Naive thymus-derived CD4-positive, alpha-beta T cell (primary cell): ENCODE measurements at regions of chr1 and their contacts with region 1.

Region 1: GRCh38 chr1:228212966-228213844 is 5.4 kb downstream of the OBSCN start:
- DNase-seq: peak; percentile 71 to 88 (median 82)
- ATAC-seq: peak; percentile 95
- H3K4me3 ChIP-seq: peak overlapping the region; percentile 68
- H3K4me3 Mint-ChIP-seq: peak overlapping the region; percentile 77 to 95 (median 91)
- H3K27ac ChIP-seq: peak overlapping the region; percentile 73
- H3K27ac Mint-ChIP-seq: peak overlapping the region; percentile 28 to 96 (median 88)
- H3K4me1 ChIP-seq: no peaks in the 10 kb centered on the region
- H3K4me1 Mint-ChIP-seq: peaks cover 3 to 13% (median 5%) of the 10 kb centered on the region in 7 donors
- H3K27me3 ChIP-seq: no peaks in the 10 kb centered on the region
- H3K27me3 Mint-ChIP-seq: no peaks in the 10 kb centered on the region

Region 2: GRCh38 chr1:228082135-228082891 is 130.9 kb before region 1 on chr1 and contains the start of gene ARF1:
- CTCF ChIA-PET with region 1: no interaction called
- POLR2A ChIA-PET with region 1: interaction called, 3 read pairs
- intact Hi-C with region 1: loop called (anchors 1 kb)
- DNase-seq: peak; percentile 89 to 99 (median 96)
- ATAC-seq: peak; percentile 97
- H3K4me3 ChIP-seq: peak within 1 kb of the TSS; percentile 88
- H3K4me3 Mint-ChIP-seq: peak within 1 kb of the TSS; percentile 89 to 97 (median 95)
- H3K27ac ChIP-seq: peak within 1 kb of the TSS; percentile 97
- H3K27ac Mint-ChIP-seq: peak within 1 kb of the TSS; percentile 76 to 97 (median 95)
- H3K4me1 ChIP-seq: peaks cover 41 to 43% of the 10 kb centered on the region in 2 donors
- H3K4me1 Mint-ChIP-seq: peaks cover 36 to 66% (median 52%) of the 10 kb centered on the region in 7 donors
- H3K27me3 ChIP-seq: no peaks in the 10 kb centered on the region
- H3K27me3 Mint-ChIP-seq: no peaks in the 10 kb centered on the region
- total RNA-seq, gene ARF1: 198 to 390 (median 259) TPM

Region 3: GRCh38 chr1:228097328-228098081 is 115.7 kb before region 1 on chr1:
- CTCF ChIA-PET with region 1: no interaction called
- POLR2A ChIA-PET with region 1: no interaction called
- intact Hi-C with region 1: no loop called
- DNase-seq: no peak
- ATAC-seq: no peak
- H3K4me3 ChIP-seq: no peak overlapping the region
- H3K4me3 Mint-ChIP-seq: no peak overlapping the region
- H3K27ac ChIP-seq: no peak overlapping the region
- H3K27ac Mint-ChIP-seq: peak overlapping the region in 3 of 9 donors; percentile 26 to 86 (median 81)
- H3K4me1 ChIP-seq: peaks cover 12 to 19% of the 10 kb centered on the region in 2 donors
- H3K4me1 Mint-ChIP-seq: peaks cover 18 to 41% (median 34%) of the 10 kb centered on the region in 7 donors
- H3K27me3 ChIP-seq: no peaks in the 10 kb centered on the region
- H3K27me3 Mint-ChIP-seq: no peaks in the 10 kb centered on the region

Region 4: GRCh38 chr1:228131766-228132165 is 81.4 kb before region 1 on chr1:
- CTCF ChIA-PET with region 1: no interaction called
- POLR2A ChIA-PET with region 1: no interaction called
- intact Hi-C with region 1: loop called in 1 of 2 experiments (anchors 1 kb)
- DNase-seq: peak in 1 of 9 donors; percentile 6
- ATAC-seq: no peak
- H3K4me3 ChIP-seq: no peak overlapping the region
- H3K4me3 Mint-ChIP-seq: no peak overlapping the region
- H3K27ac ChIP-seq: no peak overlapping the region
- H3K27ac Mint-ChIP-seq: no peak overlapping the region
- H3K4me1 ChIP-seq: peaks cover 0 to 11% of the 10 kb centered on the region in 2 donors
- H3K4me1 Mint-ChIP-seq: peaks cover 0 to 11% (median 7%) of the 10 kb centered on the region in 7 donors
- H3K27me3 ChIP-seq: no peaks in the 10 kb centered on the region
- H3K27me3 Mint-ChIP-seq: peaks cover 0 to 53% (median 9%) of the 10 kb centered on the region in 5 donors

Region 5: GRCh38 chr1:228174482-228175375 is 38.5 kb before region 1 on chr1:
- CTCF ChIA-PET with region 1: no interaction called
- POLR2A ChIA-PET with region 1: no interaction called
- intact Hi-C with region 1: loop called in 1 of 2 experiments (anchors 2 kb)
- DNase-seq: peak in 5 of 9 donors; percentile 24 to 58 (median 34)
- ATAC-seq: peak; percentile 78
- H3K4me3 ChIP-seq: no peak overlapping the region
- H3K4me3 Mint-ChIP-seq: no peak overlapping the region
- H3K27ac ChIP-seq: no peak overlapping the region
- H3K27ac Mint-ChIP-seq: peak overlapping the region in 1 of 9 donors; percentile 67
- H3K4me1 ChIP-seq: no peaks in the 10 kb centered on the region
- H3K4me1 Mint-ChIP-seq: peaks cover 3 to 18% (median 10%) of the 10 kb centered on the region in 7 donors
- H3K27me3 ChIP-seq: no peaks in the 10 kb centered on the region
- H3K27me3 Mint-ChIP-seq: no peaks in the 10 kb centered on the region

Region 6: DNA sequence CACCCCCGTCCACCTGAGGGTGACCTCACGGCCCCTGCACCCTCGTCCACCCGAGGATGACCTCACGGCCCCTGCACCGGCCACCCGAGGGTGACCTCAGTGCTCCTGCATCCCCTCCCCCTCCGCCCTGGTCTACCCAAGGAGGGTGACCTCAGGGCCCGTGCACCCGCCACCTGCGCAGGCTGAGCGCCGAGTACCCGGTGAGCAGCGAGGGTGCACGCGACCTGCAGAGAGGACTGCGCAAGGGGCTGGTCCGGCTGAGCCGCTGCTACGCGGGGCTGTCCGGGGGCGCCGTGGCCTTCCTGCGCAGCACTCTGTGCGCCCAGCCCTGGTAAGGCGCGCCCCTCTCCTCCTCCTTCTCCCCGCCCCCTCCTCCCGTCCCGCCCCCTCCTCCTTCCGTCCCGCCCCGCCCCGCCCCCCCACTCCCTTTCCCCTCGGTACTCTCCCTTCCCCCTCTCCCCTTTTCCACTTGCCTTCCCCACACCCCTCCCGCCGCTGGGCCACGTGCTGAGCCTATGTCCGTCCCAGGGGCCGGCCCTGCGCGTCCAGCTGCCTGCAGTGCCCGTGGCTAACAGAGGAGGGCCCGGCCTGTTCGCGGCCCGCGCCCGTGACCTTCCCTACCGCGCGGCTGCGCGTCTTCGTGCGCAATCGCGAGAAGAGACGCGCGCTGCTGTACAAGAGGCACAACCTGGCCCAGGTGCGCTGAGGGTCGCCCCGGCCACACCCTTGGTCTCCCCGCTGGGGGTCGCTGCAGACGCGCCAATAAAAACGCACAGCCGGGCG is 165.1 kb after region 1 on chr1:
- CTCF ChIA-PET with region 1: no interaction called
- POLR2A ChIA-PET with region 1: no interaction called
- intact Hi-C with region 1: loop called (anchors 1 kb)
- DNase-seq: peak; percentile 37 to 75 (median 61)
- ATAC-seq: peak; percentile 58
- H3K4me3 ChIP-seq: peak overlapping the region; percentile 37
- H3K4me3 Mint-ChIP-seq: peak overlapping the region; percentile 80 to 90 (median 84)
- H3K27ac ChIP-seq: no peak overlapping the region
- H3K27ac Mint-ChIP-seq: peak overlapping the region in 4 of 9 donors; percentile 28 to 72 (median 51)
- H3K4me1 ChIP-seq: no peaks in the 10 kb centered on the region
- H3K4me1 Mint-ChIP-seq: peaks cover 6 to 18% (median 8%) of the 10 kb centered on the region in 7 donors
- H3K27me3 ChIP-seq: peaks cover 0 to 4% of the 10 kb centered on the region in 2 donors
- H3K27me3 Mint-ChIP-seq: peaks cover 0 to 42% (median 9%) of the 10 kb centered on the region in 5 donors

Region 7: DNA sequence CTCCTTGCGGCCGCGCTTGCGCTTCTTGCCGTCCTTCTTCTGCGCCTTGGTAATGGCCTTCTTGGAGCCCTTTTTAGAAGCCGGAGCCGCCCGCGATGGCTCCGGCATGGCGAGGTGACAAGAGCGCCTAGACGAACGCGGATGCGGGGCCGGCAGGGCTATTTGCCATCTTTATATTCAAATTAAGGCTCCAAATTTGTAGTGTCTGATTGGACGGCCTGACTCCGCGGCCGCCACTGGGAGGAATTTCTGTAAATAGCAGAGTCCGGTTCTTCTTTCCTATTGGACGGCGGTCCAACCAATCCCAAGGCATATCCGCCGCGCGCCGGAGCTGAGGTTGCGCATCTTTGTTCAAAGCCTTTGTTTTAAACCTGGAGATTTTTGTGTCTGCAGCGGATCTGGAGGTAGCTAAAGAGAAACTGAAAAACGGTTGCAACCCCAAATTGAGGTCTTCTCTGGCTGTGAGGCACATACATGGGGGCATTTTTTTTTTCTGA is 251.3 kb after region 1 on chr1:
- CTCF ChIA-PET with region 1: no interaction called
- POLR2A ChIA-PET with region 1: no interaction called
- intact Hi-C with region 1: loop called (anchors 1 kb)
- DNase-seq: peak; percentile 56 to 93 (median 85)
- ATAC-seq: peak; percentile 98
- H3K4me3 ChIP-seq: peak overlapping the region; percentile 62
- H3K4me3 Mint-ChIP-seq: peak overlapping the region; percentile 73 to 93 (median 82)
- H3K27ac ChIP-seq: peak overlapping the region; percentile 50
- H3K27ac Mint-ChIP-seq: peak overlapping the region; percentile 13 to 92 (median 62)
- H3K4me1 ChIP-seq: peaks cover 17 to 18% of the 10 kb centered on the region in 2 donors
- H3K4me1 Mint-ChIP-seq: peaks cover 24 to 66% (median 40%) of the 10 kb centered on the region in 7 donors
- H3K27me3 ChIP-seq: no peaks in the 10 kb centered on the region
- H3K27me3 Mint-ChIP-seq: peaks cover 11 to 34% (median 24%) of the 10 kb centered on the region in 5 donors

Region 8: DNA sequence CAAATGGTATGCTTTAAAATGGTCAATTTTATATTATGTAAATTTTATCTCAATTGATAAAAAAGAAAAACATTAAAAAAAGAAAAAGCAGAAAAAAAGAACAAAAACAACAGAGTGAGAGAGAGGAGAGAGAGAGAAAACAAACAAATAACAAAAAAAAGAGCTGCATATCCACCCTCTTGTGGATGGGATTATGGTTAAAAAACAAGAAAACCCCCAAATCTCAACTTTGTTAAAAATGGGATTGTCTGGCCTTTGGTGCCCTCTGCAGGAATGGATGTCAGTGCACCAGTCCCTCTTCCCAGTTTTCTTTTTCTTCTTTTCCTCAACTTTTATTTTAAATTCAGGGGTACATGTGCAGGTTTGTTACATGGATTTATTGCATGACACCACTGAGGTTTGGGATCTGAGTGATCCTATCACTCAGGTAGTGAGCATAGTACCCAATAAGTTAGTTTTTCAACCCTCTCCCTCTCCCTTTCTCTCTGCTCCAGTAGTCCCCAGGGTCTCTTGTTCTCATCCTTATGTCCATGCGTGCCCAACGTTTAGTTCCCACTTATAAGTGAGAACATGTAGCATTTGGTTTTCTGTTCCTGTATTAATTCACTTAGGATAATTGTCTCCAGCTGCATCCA is 302.1 kb after region 1 on chr1:
- CTCF ChIA-PET with region 1: no interaction called
- POLR2A ChIA-PET with region 1: no interaction called
- intact Hi-C with region 1: loop called (anchors 1 kb)
- DNase-seq: peak in 7 of 9 donors; percentile 14 to 57 (median 43)
- ATAC-seq: peak; percentile 67
- H3K4me3 ChIP-seq: no peak overlapping the region
- H3K4me3 Mint-ChIP-seq: no peak overlapping the region
- H3K27ac ChIP-seq: no peak overlapping the region
- H3K27ac Mint-ChIP-seq: no peak overlapping the region
- H3K4me1 ChIP-seq: peaks cover 0 to 6% of the 10 kb centered on the region in 2 donors
- H3K4me1 Mint-ChIP-seq: peaks cover 0 to 8% (median 6%) of the 10 kb centered on the region in 7 donors
- H3K27me3 ChIP-seq: no peaks in the 10 kb centered on the region
- H3K27me3 Mint-ChIP-seq: peaks cover 19 to 56% (median 42%) of the 10 kb centered on the region in 5 donors